Prostate gland (tissue), 2 donors: ENCODE measurements at regions of chr15 and their contacts with region 1.

Region 1: GRCh38 chr15:25508369-25509002 is 69.7 kb upstream of the UBE3A start:
- DNase-seq: no peak
- H3K4me3 ChIP-seq: no peak overlapping the region
- H3K27ac ChIP-seq: no peak overlapping the region
- H3K4me1 ChIP-seq: no peaks in the 10 kb centered on the region
- H3K27me3 ChIP-seq: no peaks in the 10 kb centered on the region
- CTCF ChIP-seq: peak in 3 of 4 experiments; percentile 55 to 59 (median 59)
- POLR2A ChIP-seq: no peak

Region 2: DNA sequence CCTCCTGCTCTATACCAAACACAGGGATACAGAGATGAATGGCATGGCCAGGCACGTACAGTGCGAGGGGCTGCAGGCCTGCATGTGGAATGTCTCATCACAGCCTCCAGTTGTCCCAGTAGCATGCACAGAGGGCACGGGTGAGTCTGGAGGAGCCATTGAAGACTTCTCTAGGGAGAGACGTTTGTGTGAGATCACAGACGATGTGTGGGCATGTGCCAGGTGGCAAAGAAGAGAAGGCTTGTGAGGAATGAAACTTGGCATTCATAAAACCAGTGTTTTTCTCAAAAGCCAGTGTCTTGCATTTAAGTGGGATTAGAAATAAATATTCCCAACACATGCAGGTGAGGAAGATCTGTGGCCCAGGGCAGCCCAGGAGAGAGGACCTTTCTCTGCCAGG is 49.4 kb after region 1 on chr15:
- intact Hi-C with region 1: no loop called
- DNase-seq: no peak
- H3K4me3 ChIP-seq: no peak overlapping the region
- H3K27ac ChIP-seq: no peak overlapping the region
- H3K4me1 ChIP-seq: no peaks in the 10 kb centered on the region
- H3K27me3 ChIP-seq: no peaks in the 10 kb centered on the region
- CTCF ChIP-seq: no peak
- POLR2A ChIP-seq: no peak

Region 3: DNA sequence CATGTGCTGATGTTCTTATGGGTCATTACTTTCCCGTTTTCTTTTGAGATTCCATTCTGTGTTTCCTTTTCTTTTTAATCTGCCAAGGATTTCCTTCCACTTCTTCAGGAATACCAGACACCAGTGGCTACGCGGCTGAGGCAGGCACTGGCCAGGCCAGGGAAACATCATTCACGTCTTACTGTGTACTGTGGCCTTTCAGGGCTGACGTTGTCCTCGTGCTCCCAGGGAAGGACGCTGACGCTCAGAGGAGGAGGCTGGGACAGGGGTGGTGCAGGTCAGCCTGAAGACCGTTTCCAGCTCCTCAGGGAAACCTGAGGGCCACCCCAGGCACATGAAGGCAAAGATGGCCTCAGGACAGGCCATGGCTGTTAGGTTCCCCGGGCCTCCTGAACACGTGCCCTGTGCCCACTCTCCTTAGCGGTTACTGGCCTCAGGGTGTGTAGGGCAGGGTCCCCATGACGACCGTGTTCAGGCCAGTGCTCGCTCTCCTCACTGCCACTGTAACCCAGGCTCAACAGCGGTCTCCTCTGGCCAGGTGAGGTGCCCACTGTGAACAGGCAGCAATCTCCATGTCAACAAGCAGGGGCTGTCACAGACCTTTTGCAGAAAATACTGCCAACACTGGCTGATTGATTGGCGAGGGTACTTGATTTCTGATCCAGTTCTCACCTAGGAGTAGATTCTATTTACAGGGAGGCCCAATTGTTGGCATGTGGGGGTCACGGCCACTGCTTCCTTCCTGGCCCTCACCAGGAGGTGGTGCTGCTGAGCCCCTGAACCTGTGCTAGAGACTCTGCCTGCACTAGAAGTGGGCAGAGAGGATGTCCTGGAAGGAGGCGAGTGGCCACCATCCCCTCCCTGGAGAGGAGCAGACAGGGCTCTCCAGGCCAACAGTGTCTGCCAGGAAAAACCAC is 185.1 kb after region 1 on chr15:
- intact Hi-C with region 1: loop called (anchors 10 kb)
- DNase-seq: no peak
- H3K4me3 ChIP-seq: no peak overlapping the region
- H3K27ac ChIP-seq: no peak overlapping the region
- H3K4me1 ChIP-seq: no peaks in the 10 kb centered on the region
- H3K27me3 ChIP-seq: no peaks in the 10 kb centered on the region
- CTCF ChIP-seq: peak in 3 of 4 experiments; percentile 46 to 64 (median 50)
- POLR2A ChIP-seq: no peak

Region 4: GRCh38 chr15:25933456-25934158 is 425.1 kb after region 1 on chr15:
- intact Hi-C with region 1: loop called (anchors 5 kb)
- DNase-seq: peak; percentile 57
- H3K4me3 ChIP-seq: no peak overlapping the region
- H3K27ac ChIP-seq: no peak overlapping the region
- H3K4me1 ChIP-seq: no peaks in the 10 kb centered on the region
- H3K27me3 ChIP-seq: no peaks in the 10 kb centered on the region
- CTCF ChIP-seq: peak; percentile 27 to 66 (median 50)
- POLR2A ChIP-seq: no peak

Region 5: GRCh38 chr15:26864664-26865191 is 1356.2 kb after region 1 on chr15:
- intact Hi-C with region 1: loop called (anchors 5 kb)
- DNase-seq: no peak
- H3K4me3 ChIP-seq: no peak overlapping the region
- H3K27ac ChIP-seq: no peak overlapping the region
- H3K4me1 ChIP-seq: peaks cover 7% of the 10 kb centered on the region
- H3K27me3 ChIP-seq: no peaks in the 10 kb centered on the region
- CTCF ChIP-seq: peak; percentile 14 to 53 (median 30)
- POLR2A ChIP-seq: no peak